MCF 10A (cell line): ENCODE measurements at regions of chr5 and their contacts with region 1.

Region 1: DNA sequence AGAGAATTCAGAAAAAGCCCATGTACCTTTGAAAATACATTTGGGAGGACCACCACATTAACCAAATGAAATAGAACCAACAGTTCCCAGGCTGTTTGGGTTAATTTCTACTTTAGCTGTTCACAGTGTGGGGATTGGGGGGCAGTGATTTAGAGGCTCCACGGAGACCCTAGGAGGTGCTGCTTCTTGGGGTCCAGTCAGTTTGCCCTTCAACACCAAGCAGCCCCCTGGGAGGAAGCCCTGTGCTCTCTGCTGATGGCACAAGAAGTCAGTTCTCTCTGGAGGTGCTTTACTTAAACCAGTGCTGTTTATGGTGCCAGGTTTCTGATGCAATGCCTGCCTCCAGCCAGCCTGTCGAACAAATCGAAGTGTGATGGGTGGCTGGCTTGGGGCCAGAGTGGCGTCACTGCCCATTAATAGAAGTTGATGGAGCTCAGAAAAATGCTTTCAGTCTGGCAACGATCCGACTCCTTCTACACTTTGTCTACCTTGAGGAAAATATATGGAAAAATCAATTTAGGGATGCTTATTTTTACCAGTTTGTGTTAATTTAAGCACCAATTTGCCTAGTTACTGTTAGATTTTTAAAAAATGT is 134.0 kb downstream of the SNX18 start:
- DNase-seq: peak; percentile 96
- H3K4me3 Mint-ChIP-seq: no peak overlapping the region
- H3K27ac Mint-ChIP-seq: peak overlapping the region; percentile 49
- H3K4me1 Mint-ChIP-seq: peaks cover 25% of the 10 kb centered on the region
- H3K27me3 Mint-ChIP-seq: no peaks in the 10 kb centered on the region
- CTCF ChIP-seq: no peak

Region 2: GRCh38 chr5:54637654-54638053 is 13.9 kb before region 1 on chr5:
- CTCF ChIA-PET with region 1: no interaction called
- POLR2A ChIA-PET with region 1: no interaction called
- intact Hi-C with region 1: no loop called
- DNase-seq: no peak
- H3K4me3 Mint-ChIP-seq: no peak overlapping the region
- H3K27ac Mint-ChIP-seq: no peak overlapping the region
- H3K4me1 Mint-ChIP-seq: no peaks in the 10 kb centered on the region
- H3K27me3 Mint-ChIP-seq: no peaks in the 10 kb centered on the region
- CTCF ChIP-seq: no peak

Region 3: GRCh38 chr5:54703133-54703532 is 51.6 kb after region 1 on chr5:
- CTCF ChIA-PET with region 1: no interaction called
- POLR2A ChIA-PET with region 1: no interaction called
- intact Hi-C with region 1: loop called (anchors 5 kb)
- DNase-seq: peak; percentile 46
- H3K4me3 Mint-ChIP-seq: no peak overlapping the region
- H3K27ac Mint-ChIP-seq: no peak overlapping the region
- H3K4me1 Mint-ChIP-seq: peaks cover 12% of the 10 kb centered on the region
- H3K27me3 Mint-ChIP-seq: peaks cover 15% of the 10 kb centered on the region
- CTCF ChIP-seq: no peak